Gastrocnemius medialis (tissue), 4 donors: ENCODE measurements at regions of chr7 and their contacts with region 1.

Region 1: GRCh38 chr7:83655951-83656556 is 7.1 kb upstream of the SEMA3E start:
- DNase-seq: no peak
- ATAC-seq: no peak
- H3K4me3 ChIP-seq: no peak overlapping the region
- H3K27ac ChIP-seq: no peak overlapping the region
- H3K4me1 ChIP-seq: no peaks in the 10 kb centered on the region
- H3K27me3 ChIP-seq: no peaks in the 10 kb centered on the region
- CTCF ChIP-seq: peak in 2 of 5 experiments; percentile 33 to 40
- POLR2A ChIP-seq: no peak

Region 2: DNA sequence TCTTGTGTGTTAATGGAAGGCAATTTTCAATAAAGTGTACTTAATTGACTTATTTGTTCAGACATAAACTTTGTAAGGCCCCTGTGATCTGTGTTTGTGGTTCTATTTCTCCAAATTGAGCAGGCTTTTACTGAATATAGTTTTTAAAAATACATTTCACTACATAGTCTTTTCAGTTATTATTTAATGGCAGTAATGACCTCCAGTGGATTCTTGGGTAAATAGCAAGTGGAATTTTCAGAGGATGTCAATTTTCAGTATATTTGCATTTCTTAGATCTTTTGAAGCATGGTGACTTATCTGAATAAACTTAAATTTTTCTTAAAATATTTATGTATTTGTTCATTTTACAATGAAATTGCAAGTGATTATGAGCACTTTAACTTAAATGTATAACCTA is 290.3 kb before region 1 on chr7:
- in situ Hi-C with region 1: no loop called
- intact Hi-C with region 1: no loop called
- DNase-seq: no peak
- ATAC-seq: no peak
- H3K4me3 ChIP-seq: no peak overlapping the region
- H3K27ac ChIP-seq: no peak overlapping the region
- H3K4me1 ChIP-seq: no peaks in the 10 kb centered on the region
- H3K27me3 ChIP-seq: no peaks in the 10 kb centered on the region
- CTCF ChIP-seq: no peak
- POLR2A ChIP-seq: no peak

Region 3: GRCh38 chr7:83410989-83411591 is 245.0 kb before region 1 on chr7:
- in situ Hi-C with region 1: loop called in 1 of 4 experiments (anchors 25 kb)
- intact Hi-C with region 1: no loop called
- DNase-seq: no peak
- ATAC-seq: no peak
- H3K4me3 ChIP-seq: no peak overlapping the region
- H3K27ac ChIP-seq: no peak overlapping the region
- H3K4me1 ChIP-seq: no peaks in the 10 kb centered on the region
- H3K27me3 ChIP-seq: no peaks in the 10 kb centered on the region
- CTCF ChIP-seq: peak in 3 of 5 experiments; percentile 18 to 34 (median 33)
- POLR2A ChIP-seq: no peak